ENCODE measurements at regions of chr13 and their contacts with region 1.

Region 1: DNA sequence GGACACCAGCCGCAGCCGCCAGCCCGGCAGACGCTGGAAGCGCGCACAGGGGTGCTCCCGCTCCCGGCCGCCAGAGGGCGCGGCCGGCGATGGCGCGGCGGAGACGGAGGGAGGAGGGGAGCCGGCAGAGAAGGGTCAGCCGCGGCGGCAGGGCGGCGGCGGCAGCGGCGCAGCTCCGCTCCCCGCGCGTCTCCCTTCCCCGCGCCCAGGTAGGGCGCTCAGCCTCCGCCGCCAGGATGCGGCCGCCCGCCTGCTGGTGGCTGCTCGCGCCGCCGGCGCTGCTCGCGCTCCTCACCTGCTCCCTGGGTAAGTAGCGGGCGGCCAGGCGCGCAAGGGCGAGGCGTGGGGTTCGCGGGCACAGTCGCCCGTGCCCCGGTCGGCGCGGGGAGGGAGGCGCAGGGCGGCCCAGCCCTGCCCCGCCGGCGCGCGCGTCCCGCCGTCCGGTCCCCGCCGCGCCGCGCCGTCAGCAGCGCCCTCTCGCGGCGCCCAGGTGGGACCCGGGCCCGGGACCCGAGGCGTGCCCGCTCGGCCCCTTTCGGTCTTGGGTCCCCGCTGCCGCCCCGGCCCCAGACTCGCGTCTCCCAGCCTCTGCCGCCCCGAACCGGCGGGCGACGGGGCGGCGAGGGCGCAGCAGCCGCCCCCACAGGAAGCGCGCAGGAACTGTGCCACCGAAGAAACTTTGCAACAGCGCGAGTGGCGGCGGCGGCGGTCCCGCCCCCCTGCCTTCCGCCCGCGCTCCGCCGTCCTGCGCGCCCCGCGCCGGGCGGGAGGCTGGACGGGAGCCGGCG is at the start of gene B3GLCT:
- DNase-seq: peak; percentile 69 to 84 (median 75)
- H3K4me3 ChIP-seq: peak within 1 kb of the TSS; percentile 38 to 64 (median 46)
- H3K27ac ChIP-seq: peak within 1 kb of the TSS; percentile 65 to 99 (median 93)
- H3K4me1 ChIP-seq: peaks cover 11 to 16% of the 10 kb centered on the region in 2 donors
- H3K27me3 ChIP-seq: no peaks in the 10 kb centered on the region
- CTCF ChIP-seq: peak in 5 of 6 experiments; percentile 15 to 97 (median 90)
- POLR2A ChIP-seq: peak in 1 of 2 donors; percentile 47
- total RNA-seq, gene B3GLCT: 2.2 to 6.4 (median 4.0) TPM

Region 2: GRCh38 chr13:30696278-30697176 is 503.5 kb before region 1 on chr13:
- intact Hi-C with region 1: no loop called
- DNase-seq: peak in 6 of 7 donors; percentile 50 to 78 (median 66)
- H3K4me3 ChIP-seq: no peak overlapping the region
- H3K27ac ChIP-seq: peak overlapping the region in 4 of 5 donors; percentile 3 to 76 (median 27)
- H3K4me1 ChIP-seq: peaks cover 0 to 25% of the 10 kb centered on the region in 2 donors
- H3K27me3 ChIP-seq: no peaks in the 10 kb centered on the region
- CTCF ChIP-seq: no peak
- POLR2A ChIP-seq: no peak

Region 3: DNA sequence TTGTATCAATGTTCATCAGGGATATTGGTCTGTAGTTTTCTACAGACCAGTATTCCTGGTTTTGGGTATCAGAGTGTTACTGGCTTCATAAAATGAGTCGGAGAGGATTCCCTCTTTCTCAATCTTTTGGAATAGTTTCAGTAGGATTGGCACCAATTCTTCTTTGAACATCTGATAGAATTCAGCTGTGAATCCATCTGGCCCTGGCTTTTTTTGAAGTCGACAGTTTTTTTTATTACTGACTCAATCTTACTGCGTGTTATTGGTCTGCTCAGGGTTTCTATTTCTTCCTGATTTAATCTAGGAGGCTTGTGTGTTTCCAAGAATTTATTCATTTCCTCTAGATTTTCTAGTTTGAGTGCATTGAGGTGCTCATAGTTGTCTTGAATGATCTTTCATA is 256.2 kb before region 1 on chr13:
- intact Hi-C with region 1: no loop called
- DNase-seq: no peak
- H3K4me3 ChIP-seq: no peak overlapping the region
- H3K27ac ChIP-seq: no peak overlapping the region
- H3K4me1 ChIP-seq: no peaks in the 10 kb centered on the region
- H3K27me3 ChIP-seq: no peaks in the 10 kb centered on the region
- CTCF ChIP-seq: no peak
- POLR2A ChIP-seq: no peak

Region 4: GRCh38 chr13:31161828-31162590 is 38.0 kb before region 1 on chr13 and contains the start of gene HSPH1:
- intact Hi-C with region 1: loop called in 1 of 2 experiments (anchors 5 kb)
- DNase-seq: peak; percentile 99 to 100 (median 99)
- H3K4me3 ChIP-seq: peak within 1 kb of the TSS; percentile 56 to 99 (median 84)
- H3K27ac ChIP-seq: peak within 1 kb of the TSS; percentile 40 to 100 (median 88)
- H3K4me1 ChIP-seq: peaks cover 16 to 30% of the 10 kb centered on the region in 2 donors
- H3K27me3 ChIP-seq: no peaks in the 10 kb centered on the region
- CTCF ChIP-seq: peak in 1 of 6 experiments; percentile 12
- POLR2A ChIP-seq: peak; percentile 66 to 89
- total RNA-seq, gene HSPH1: 19.8 to 106 (median 50.8) TPM

Region 5: DNA sequence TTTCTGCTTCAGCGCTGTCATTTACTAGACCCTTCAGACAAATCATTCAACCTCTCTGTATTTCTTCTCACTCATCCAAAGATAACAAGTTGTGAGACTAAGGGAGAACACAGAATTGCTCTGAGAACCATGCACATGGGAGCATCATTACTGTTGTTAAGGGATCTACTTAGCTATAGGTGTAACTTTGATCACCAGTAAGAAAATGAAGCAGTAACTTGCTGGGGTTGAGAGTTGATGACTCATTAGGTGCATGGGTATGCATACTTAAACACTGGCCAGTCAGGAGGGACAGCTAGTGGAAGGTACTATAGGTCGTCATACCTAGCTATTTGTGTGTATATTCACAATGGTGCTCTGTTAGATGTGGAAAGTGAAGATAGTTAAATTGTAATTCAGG is 61.2 kb after region 1 on chr13:
- intact Hi-C with region 1: no loop called
- DNase-seq: no peak
- H3K4me3 ChIP-seq: no peak overlapping the region
- H3K27ac ChIP-seq: no peak overlapping the region
- H3K4me1 ChIP-seq: no peaks in the 10 kb centered on the region
- H3K27me3 ChIP-seq: no peaks in the 10 kb centered on the region
- CTCF ChIP-seq: no peak
- POLR2A ChIP-seq: no peak

Region 6: GRCh38 chr13:31424117-31424729 is 224.2 kb after region 1 on chr13:
- intact Hi-C with region 1: loop called (anchors 10 kb)
- DNase-seq: peak; percentile 75 to 90 (median 84)
- H3K4me3 ChIP-seq: no peak overlapping the region
- H3K27ac ChIP-seq: no peak overlapping the region
- H3K4me1 ChIP-seq: peaks cover 0 to 3% of the 10 kb centered on the region in 2 donors
- H3K27me3 ChIP-seq: no peaks in the 10 kb centered on the region
- CTCF ChIP-seq: peak; percentile 70 to 87 (median 84)
- POLR2A ChIP-seq: no peak

Measured in adrenal gland (tissue), 19 donors.